ENCODE measurements at regions of chr3 and their contacts with region 1.

Region 1: DNA sequence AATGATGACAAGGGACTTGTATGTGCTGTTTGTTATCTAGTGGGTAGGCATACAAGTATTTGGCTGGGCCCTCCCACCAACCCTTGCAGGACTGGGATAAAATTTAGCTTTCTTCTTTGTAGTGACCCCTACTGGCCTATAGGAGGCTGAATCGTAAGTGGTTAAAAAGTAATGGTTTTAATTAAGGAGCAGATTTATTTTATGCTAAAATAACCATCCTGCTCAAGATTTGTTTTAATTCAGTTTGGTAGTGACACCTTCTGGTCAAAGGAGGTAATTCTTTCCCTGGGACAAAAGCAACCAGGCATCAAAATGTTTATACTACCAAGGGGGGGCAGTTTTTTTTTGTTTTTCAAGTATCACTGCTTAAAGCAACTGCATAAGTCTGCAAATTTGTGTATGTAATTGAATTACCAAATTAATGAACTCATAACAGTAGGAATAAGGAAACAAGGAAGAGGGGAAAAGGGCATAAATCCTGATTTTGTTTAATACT is 70.7 kb downstream of the TOP2B start:
- DNase-seq: no peak
- ATAC-seq: peak in 1 of 2 donors; percentile 45
- H3K4me3 ChIP-seq: no peak overlapping the region
- H3K27ac ChIP-seq: no peak overlapping the region
- H3K4me1 ChIP-seq: peaks cover 14 to 33% of the 10 kb centered on the region in 2 donors
- H3K27me3 ChIP-seq: no peaks in the 10 kb centered on the region
- CTCF ChIP-seq: peak; percentile 66 to 83 (median 77)
- POLR2A ChIP-seq: no peak

Region 2: GRCh38 chr3:24793896-24794295 is 800.2 kb before region 1 on chr3:
- in situ Hi-C with region 1: loop called in 1 of 4 experiments (anchors 25 kb)
- intact Hi-C with region 1: no loop called
- DNase-seq: no peak
- ATAC-seq: no peak
- H3K4me3 ChIP-seq: no peak overlapping the region
- H3K27ac ChIP-seq: no peak overlapping the region
- H3K4me1 ChIP-seq: no peaks in the 10 kb centered on the region
- H3K27me3 ChIP-seq: no peaks in the 10 kb centered on the region
- CTCF ChIP-seq: no peak
- POLR2A ChIP-seq: no peak

Region 3: DNA sequence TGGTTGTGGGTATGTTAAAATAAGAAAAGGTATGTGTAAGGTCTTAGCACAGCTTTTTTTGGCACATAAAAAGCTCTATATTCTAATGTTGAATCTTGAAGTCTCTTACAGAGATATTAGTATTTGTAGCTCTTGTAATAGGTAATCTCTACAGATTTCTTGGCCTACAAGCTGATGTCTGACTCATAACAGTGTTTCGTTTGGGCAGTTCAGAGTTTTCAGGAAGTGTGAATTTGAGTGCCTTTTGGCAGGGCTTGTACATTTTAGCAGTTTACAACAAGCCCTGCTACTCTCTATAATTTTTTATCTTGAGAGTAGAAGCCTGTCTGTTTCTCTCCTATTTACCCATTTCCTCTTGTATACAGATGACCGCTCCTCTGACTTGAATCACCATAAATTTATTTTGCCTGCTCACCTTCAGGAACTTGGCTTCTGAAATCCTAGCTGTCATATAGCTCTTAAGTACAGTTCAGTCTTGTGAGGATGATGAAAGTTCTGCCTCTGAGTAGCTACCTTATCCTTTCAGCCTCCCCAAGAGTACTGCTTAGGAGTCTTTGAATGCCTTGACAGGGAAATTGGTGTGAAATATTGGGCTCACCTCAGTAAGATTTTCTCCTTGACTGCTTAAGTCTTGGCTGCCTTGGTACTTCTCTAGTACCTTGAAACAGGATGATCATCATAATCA is 585.9 kb before region 1 on chr3:
- in situ Hi-C with region 1: loop called in 1 of 4 experiments (anchors 25 kb)
- intact Hi-C with region 1: no loop called
- DNase-seq: no peak
- ATAC-seq: no peak
- H3K4me3 ChIP-seq: no peak overlapping the region
- H3K27ac ChIP-seq: no peak overlapping the region
- H3K4me1 ChIP-seq: no peaks in the 10 kb centered on the region
- H3K27me3 ChIP-seq: no peaks in the 10 kb centered on the region
- CTCF ChIP-seq: no peak
- POLR2A ChIP-seq: no peak

Region 4: DNA sequence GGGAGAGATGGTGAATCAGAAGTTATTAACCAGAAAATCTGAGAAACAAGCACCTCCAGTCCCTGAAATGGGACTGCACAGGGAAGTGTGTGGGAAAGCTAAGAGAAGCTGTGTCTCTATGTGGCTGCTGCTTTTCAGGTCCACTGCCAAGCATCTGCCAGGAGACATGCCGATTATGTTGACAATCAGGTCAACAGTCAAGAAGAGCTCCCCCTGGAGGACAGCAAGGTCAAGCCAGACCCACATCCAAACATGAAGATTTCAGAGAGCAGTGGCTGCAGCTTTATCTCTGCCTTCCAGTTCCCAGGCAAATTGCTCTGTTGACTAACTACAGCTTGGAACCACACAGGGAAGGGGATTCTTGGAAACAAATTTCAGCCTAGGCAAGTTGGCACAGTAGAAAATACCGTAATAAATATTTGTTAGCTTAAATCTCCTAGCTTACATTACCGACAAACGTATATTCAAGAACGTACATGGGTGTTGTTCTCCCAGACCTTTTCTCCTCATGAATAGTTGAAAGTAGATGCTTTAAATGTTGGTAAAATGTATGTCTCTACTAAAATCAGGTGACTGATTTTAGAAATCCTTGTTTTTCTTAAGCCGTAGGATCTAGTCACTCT is 560.5 kb before region 1 on chr3:
- in situ Hi-C with region 1: loop called in 2 of 4 experiments (anchors 10 kb)
- intact Hi-C with region 1: loop called (anchors 10 kb)
- DNase-seq: peak in 1 of 2 donors; percentile 33
- ATAC-seq: peak; percentile 26 to 55
- H3K4me3 ChIP-seq: no peak overlapping the region
- H3K27ac ChIP-seq: no peak overlapping the region
- H3K4me1 ChIP-seq: peaks cover 8 to 14% of the 10 kb centered on the region in 2 donors
- H3K27me3 ChIP-seq: no peaks in the 10 kb centered on the region
- CTCF ChIP-seq: peak in 4 of 5 experiments; percentile 35 to 59 (median 52)
- POLR2A ChIP-seq: no peak

Region 5: GRCh38 chr3:25433868-25434267 is 160.2 kb before region 1 on chr3:
- in situ Hi-C with region 1: loop called in 2 of 4 experiments (anchors 10 kb)
- intact Hi-C with region 1: no loop called
- DNase-seq: no peak
- ATAC-seq: peak in 1 of 2 donors; percentile 29
- H3K4me3 ChIP-seq: no peak overlapping the region
- H3K27ac ChIP-seq: peak overlapping the region; percentile 22 to 50 (median 41)
- H3K4me1 ChIP-seq: peaks cover 13 to 39% of the 10 kb centered on the region in 2 donors
- H3K27me3 ChIP-seq: no peaks in the 10 kb centered on the region
- CTCF ChIP-seq: no peak
- POLR2A ChIP-seq: no peak

Region 6: GRCh38 chr3:25547943-25548674 is 45.9 kb before region 1 on chr3:
- in situ Hi-C with region 1: no loop called
- intact Hi-C with region 1: no loop called
- DNase-seq: no peak
- ATAC-seq: no peak
- H3K4me3 ChIP-seq: no peak overlapping the region
- H3K27ac ChIP-seq: no peak overlapping the region
- H3K4me1 ChIP-seq: peaks cover 3 to 17% of the 10 kb centered on the region in 2 donors
- H3K27me3 ChIP-seq: no peaks in the 10 kb centered on the region
- CTCF ChIP-seq: no peak
- POLR2A ChIP-seq: no peak